Naive thymus-derived CD8-positive, alpha-beta T cell (primary cell): ENCODE measurements at regions of chr7 and their contacts with region 1.

Region 1: GRCh38 chr7:47991741-47992311 is 12.4 kb upstream of the HUS1 start:
- DNase-seq: peak; percentile 69 to 93 (median 82)
- ATAC-seq: peak; percentile 94 to 98
- H3K4me3 Mint-ChIP-seq: peak overlapping the region; percentile 91 to 98 (median 94)
- H3K27ac Mint-ChIP-seq: peak overlapping the region; percentile 93 to 98 (median 95)
- H3K4me1 Mint-ChIP-seq: peaks cover 18 to 20% (median 20%) of the 10 kb centered on the region in 4 donors
- H3K27me3 Mint-ChIP-seq: no peaks in the 10 kb centered on the region

Region 2: GRCh38 chr7:47968847-47969774 is 22.7 kb before region 1 on chr7:
- POLR2A ChIA-PET with region 1: interaction called, 10 read pairs
- DNase-seq: peak in 9 of 10 donors; percentile 15 to 51 (median 36)
- ATAC-seq: peak; percentile 86 to 88
- H3K4me3 Mint-ChIP-seq: peak overlapping the region in 1 of 10 donors; percentile 3
- H3K27ac Mint-ChIP-seq: peak overlapping the region in 8 of 10 donors; percentile 32 to 79 (median 64)
- H3K4me1 Mint-ChIP-seq: peaks cover 22 to 44% (median 39%) of the 10 kb centered on the region in 4 donors
- H3K27me3 Mint-ChIP-seq: no peaks in the 10 kb centered on the region

Region 3: DNA sequence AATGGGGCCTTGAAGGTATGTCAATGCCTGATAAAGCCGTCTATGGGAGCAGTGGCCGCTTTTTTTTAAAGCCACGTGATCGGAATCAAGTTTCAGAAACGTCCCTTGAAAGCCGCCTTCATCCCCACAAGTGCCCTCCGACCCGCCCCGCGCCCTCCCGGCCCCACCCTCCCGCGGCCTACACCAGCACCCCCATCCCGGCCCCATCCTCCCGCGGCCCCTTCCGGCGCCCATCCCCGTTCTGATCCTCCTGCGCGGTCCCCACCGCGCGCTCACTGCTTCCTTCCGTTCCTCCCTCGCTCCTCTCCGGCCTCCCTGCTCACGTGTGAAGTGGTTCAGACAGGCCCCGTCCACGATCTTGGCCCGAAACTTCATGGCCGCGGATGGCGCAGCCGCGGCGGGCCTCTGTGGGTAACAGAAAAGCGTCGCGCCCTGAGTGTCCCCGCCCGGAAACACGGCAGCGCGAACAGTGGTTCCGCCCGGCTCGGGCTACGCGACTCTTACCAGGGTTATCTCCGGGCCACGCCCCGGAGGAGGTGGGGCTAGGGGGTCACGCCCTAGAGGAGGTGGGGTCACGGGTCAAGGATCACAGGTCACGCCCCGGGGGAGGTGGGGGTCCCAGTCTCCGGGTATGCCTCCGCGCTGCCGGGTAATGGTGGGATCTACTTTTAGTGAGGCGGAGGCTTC is 12.5 kb before region 1 on chr7 and contains the start of gene HUS1:
- POLR2A ChIA-PET with region 1: interaction called, 11 read pairs
- DNase-seq: peak; percentile 82 to 97 (median 90)
- ATAC-seq: peak; percentile 97 to 98
- H3K4me3 Mint-ChIP-seq: peak within 1 kb of the TSS; percentile 86 to 100 (median 98)
- H3K27ac Mint-ChIP-seq: peak within 1 kb of the TSS; percentile 98 to 100 (median 100)
- H3K4me1 Mint-ChIP-seq: peaks cover 14 to 35% (median 29%) of the 10 kb centered on the region in 4 donors
- H3K27me3 Mint-ChIP-seq: peaks cover 0 to 2% (median 0%) of the 10 kb centered on the region in 5 donors
- polyA plus RNA-seq, gene HUS1: 26.9 to 36.8 (median 32.5) TPM

Region 4: DNA sequence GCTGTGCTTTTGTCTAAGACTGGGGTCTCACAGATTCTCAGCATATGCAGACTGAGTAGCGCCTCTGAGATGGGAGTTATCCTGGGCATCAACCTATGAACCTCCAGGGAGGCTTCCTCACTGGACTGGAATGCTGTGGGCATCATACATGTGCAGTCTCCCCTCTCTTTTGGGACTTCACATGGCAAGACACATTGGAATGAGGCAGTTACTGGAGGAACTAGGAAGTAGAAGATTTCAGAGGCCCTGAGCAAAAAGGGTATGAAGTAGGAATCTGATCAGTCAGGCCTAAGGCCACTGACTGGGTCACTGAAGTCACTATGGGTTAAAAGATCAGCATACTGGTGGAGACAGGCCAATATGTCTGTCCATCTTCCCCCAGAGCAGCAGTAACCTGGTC is 23.5 kb after region 1 on chr7:
- POLR2A ChIA-PET with region 1: no interaction called
- DNase-seq: no peak
- ATAC-seq: no peak
- H3K4me3 Mint-ChIP-seq: no peak overlapping the region
- H3K27ac Mint-ChIP-seq: no peak overlapping the region
- H3K4me1 Mint-ChIP-seq: peaks cover 0 to 2% (median 0%) of the 10 kb centered on the region in 4 donors
- H3K27me3 Mint-ChIP-seq: peaks cover 0 to 10% (median 3%) of the 10 kb centered on the region in 5 donors

Region 5: DNA sequence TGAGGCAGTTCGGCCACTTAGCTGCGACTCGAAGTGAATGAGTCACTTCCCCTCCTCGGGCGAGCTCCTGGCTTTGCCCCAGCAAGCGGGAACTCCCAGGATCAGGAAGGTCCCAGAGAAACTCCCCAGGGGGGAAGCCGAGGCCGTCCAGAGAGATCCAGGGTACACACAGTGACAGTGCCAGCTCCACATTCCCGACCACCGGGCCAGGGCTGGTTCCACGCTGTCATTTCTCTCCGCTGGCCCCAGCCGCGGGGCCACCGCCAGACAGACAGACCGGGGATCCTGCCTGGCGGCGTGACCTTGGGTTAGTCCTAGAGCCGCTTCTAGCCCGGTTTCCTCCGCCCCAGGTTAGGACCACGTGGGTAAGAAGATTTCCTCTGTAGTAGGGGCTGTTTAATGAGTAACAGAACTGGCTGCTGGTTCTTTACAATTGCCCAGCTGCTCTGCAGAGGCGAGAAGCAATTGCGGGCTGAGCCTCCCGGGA is 96.8 kb after region 1 on chr7:
- POLR2A ChIA-PET with region 1: interaction called, 45 read pairs
- DNase-seq: no peak
- ATAC-seq: peak; percentile 73 to 75
- H3K4me3 Mint-ChIP-seq: peak overlapping the region; percentile 82 to 98 (median 90)
- H3K27ac Mint-ChIP-seq: peak overlapping the region; percentile 81 to 97 (median 94)
- H3K4me1 Mint-ChIP-seq: peaks cover 40 to 90% (median 79%) of the 10 kb centered on the region in 4 donors
- H3K27me3 Mint-ChIP-seq: no peaks in the 10 kb centered on the region

Region 6: DNA sequence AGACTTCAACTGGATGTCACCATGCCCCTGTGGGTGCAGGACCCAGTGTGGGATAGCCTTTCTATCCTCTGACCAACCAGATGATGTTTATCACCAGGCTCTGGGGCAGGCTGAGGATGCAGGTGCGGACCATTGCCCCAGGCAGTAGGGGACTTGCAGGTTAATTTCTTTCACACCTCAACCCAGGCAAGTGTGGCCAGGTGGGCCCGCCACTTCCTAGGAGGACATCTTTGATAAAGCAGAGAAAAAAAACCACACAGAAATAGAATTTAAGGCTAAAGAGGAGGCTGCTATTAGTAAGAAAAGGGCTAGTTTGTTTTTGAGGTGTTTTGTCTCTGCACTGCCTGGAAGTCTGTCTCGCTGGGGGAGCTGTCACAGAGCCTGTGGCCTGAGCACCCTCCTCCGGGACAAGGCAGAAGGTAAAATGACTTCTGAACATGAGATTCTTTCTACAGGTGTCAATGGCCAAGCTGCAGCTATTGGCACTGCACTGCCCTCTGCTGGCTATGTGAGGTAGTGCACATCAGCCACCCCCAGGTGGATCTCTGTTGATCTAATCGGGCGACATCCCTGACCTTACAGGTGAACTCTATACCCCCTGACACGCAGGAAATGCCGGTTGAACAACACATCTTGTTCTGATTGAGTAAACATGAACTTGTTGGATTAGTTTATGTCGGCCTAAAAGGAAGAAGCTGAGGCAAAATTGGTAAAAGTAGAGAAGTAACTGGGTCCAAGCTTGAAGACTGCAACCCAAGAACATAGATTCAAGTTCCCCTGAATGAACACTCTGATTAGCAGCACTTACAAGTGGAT is 118.2 kb after region 1 on chr7:
- POLR2A ChIA-PET with region 1: interaction called, 54 read pairs
- DNase-seq: peak; percentile 72 to 93 (median 87)
- ATAC-seq: peak; percentile 97 to 98
- H3K4me3 Mint-ChIP-seq: peak overlapping the region in 3 of 10 donors; percentile 0 to 44 (median 37)
- H3K27ac Mint-ChIP-seq: peak overlapping the region; percentile 36 to 89 (median 81)
- H3K4me1 Mint-ChIP-seq: peaks cover 8 to 11% (median 10%) of the 10 kb centered on the region in 4 donors
- H3K27me3 Mint-ChIP-seq: no peaks in the 10 kb centered on the region

Region 7: DNA sequence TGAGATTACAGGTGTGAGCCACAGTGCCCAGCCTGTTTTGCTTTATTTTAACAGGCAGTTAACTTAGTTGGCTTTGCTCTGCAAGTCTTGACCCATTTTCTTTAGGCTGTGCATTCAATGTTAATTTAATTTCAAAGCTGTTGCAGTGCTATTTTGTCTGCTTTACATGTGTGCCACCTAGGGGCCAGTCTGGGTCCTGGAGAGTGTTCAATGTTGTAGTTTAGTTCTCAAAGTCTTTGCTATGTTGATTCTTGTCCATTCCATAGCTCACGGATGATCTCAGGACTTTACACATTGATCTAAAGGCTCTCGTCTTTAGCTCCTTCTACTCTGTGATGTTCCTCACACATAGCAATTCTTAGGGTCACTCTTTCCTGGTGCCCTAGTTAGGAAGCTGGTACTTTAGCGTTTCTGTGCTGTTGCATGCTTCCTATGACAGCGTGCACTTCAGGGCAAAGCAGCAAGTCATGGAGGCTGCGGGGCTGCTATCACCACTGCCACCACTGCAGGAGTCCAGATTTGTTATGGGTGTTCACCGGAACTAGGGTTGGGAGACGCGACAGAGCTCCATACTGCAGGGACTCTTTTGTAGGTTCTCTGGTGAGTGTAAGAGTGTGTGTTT is 163.1 kb after region 1 on chr7:
- POLR2A ChIA-PET with region 1: no interaction called
- DNase-seq: peak in 4 of 10 donors; percentile 6 to 15 (median 12)
- ATAC-seq: no peak
- H3K4me3 Mint-ChIP-seq: no peak overlapping the region
- H3K27ac Mint-ChIP-seq: peak overlapping the region in 1 of 10 donors; percentile 3
- H3K4me1 Mint-ChIP-seq: no peaks in the 10 kb centered on the region
- H3K27me3 Mint-ChIP-seq: peaks cover 14 to 31% (median 24%) of the 10 kb centered on the region in 5 donors